ENCODE measurements at regions of chr13 and their contacts with region 1.

Region 1: GRCh38 chr13:48233046-48233907 is at the start of gene ITM2B:
- DNase-seq: peak; percentile 81
- ATAC-seq: peak; percentile 74
- H3K4me3 Mint-ChIP-seq: peak within 1 kb of the TSS; percentile 90
- H3K27ac Mint-ChIP-seq: peak within 1 kb of the TSS; percentile 90
- H3K4me1 Mint-ChIP-seq: peaks cover 44% of the 10 kb centered on the region
- H3K27me3 Mint-ChIP-seq: no peaks in the 10 kb centered on the region
- total RNA-seq, gene ITM2B: 385 to 429 TPM

Region 2: DNA sequence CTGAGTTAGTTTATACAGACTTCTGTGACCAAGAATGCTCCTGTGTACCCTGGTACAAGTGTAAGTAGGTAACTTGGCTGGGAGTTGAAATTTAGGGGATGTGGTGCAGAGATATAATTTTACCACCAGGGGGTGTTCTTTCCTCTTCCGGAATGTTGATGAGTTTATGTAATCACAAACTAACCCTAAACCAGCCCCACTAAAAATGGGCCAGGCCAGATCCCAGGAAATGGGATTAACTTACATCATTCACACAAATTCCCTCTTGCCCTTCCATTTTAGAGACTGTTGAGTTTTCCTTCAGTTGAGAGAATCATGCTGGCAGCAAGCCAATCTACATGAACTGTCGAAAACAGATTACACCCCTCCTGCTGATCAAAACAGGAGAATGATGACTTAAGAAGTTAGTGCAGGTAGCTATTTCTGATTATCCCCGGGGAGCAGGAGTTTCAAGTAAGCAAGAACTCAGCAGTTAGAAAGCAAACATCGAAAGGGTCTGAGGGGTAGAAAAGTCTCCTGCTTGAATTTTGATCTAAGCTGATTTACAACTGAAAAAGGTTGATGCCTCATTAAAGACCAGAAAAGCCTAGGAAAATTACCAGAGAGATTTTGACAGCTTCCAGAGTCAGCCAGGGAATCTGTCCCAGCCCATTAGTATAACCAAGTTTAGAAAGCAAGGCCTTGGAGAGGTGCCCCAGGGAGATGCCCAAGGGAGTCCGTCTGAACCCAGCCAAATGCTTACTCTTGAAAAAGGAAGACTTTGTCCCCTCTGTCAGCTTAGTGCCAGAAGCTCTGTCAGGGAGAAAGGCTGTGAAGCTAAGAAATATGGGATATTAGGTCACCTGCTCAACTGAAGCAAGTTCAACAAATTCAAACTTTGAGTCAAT is 106.1 kb before region 1 on chr13:
- POLR2A ChIA-PET with region 1: interaction called, 15 read pairs
- DNase-seq: no peak
- ATAC-seq: peak; percentile 85
- H3K4me3 Mint-ChIP-seq: peak overlapping the region; percentile 19
- H3K27ac Mint-ChIP-seq: peak overlapping the region; percentile 63
- H3K4me1 Mint-ChIP-seq: peaks cover 15% of the 10 kb centered on the region
- H3K27me3 Mint-ChIP-seq: no peaks in the 10 kb centered on the region

Region 3: GRCh38 chr13:48155848-48156247 is 77.4 kb before region 1 on chr13:
- POLR2A ChIA-PET with region 1: interaction called, 19 read pairs
- DNase-seq: no peak
- ATAC-seq: peak; percentile 81
- H3K4me3 Mint-ChIP-seq: peak overlapping the region; percentile 55
- H3K27ac Mint-ChIP-seq: peak overlapping the region; percentile 93
- H3K4me1 Mint-ChIP-seq: peaks cover 69% of the 10 kb centered on the region
- H3K27me3 Mint-ChIP-seq: no peaks in the 10 kb centered on the region

Region 4: GRCh38 chr13:48184260-48184659 is 49.0 kb before region 1 on chr13:
- POLR2A ChIA-PET with region 1: interaction called, 39 read pairs
- DNase-seq: no peak
- ATAC-seq: no peak
- H3K4me3 Mint-ChIP-seq: peak overlapping the region; percentile 34
- H3K27ac Mint-ChIP-seq: peak overlapping the region; percentile 97
- H3K4me1 Mint-ChIP-seq: peaks cover 50% of the 10 kb centered on the region
- H3K27me3 Mint-ChIP-seq: no peaks in the 10 kb centered on the region

Region 5: DNA sequence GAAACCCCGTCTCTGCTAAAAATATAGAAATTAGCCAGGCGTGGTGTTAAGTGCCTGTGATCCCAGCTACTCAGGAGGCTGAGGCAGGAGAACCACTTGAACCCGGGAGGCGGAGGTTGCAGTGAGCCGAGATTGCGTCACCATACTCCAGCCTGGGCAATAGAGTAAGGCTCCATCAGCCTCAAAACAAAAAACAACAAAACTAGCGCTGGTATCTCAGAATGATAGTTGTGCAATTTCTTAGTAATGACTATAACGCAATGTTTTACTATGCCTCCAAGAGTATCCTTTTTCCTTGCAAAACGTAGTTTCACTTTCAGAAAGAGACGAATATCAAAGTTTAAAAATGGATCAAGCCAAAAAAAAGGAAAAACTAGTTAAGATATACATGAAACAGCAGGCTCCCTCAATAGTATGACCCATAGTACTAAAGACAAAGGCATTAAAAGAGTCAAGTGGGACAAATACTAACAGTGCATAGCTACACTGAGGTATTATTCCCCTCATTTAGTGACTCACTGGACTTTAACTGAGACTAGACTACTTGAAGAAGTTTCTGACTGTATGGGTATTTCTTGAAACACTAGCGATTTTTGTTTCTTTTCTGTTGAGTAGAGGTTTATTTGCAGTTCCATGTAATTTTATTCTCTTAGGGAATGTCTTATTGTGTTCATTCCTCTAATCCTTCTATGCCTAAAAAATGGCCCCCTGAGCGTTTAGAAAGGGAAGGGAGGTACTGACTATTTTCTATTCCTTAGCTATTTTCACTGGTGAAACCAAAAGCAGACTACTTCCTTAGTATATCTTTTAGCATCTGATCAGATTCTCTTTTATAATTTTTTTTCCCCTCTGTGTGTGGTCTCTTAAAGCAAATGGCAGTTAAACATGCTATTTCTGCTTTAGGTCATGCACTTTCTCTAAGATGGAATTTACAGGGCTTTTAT is 10.6 kb before region 1 on chr13:
- POLR2A ChIA-PET with region 1: interaction called, 21 read pairs
- DNase-seq: no peak
- ATAC-seq: no peak
- H3K4me3 Mint-ChIP-seq: peak overlapping the region; percentile 78
- H3K27ac Mint-ChIP-seq: peak overlapping the region; percentile 90
- H3K4me1 Mint-ChIP-seq: peaks cover 31% of the 10 kb centered on the region
- H3K27me3 Mint-ChIP-seq: no peaks in the 10 kb centered on the region

Region 6: DNA sequence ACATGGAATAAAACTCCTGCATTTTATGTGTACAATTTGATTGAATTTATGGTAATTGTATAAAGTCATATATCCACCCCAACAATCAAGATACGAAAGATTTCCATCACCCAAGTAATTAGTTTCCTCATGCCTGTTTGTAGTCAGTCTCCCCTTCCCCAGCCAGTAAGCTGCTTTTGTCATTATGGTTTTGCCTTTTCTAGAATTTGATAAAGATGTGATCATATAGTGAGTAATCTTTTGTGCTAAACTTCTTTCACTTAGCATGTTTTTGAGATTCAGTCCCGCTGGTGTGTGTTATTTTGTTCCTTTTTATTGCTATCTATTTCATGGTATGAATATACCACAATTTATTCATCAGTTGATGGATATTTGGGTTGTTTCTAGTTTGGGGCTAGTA is 15.7 kb after region 1 on chr13:
- POLR2A ChIA-PET with region 1: no interaction called
- DNase-seq: no peak
- ATAC-seq: no peak
- H3K4me3 Mint-ChIP-seq: no peak overlapping the region
- H3K27ac Mint-ChIP-seq: no peak overlapping the region
- H3K4me1 Mint-ChIP-seq: peaks cover 24% of the 10 kb centered on the region
- H3K27me3 Mint-ChIP-seq: no peaks in the 10 kb centered on the region

Measured in activated naive CD8-positive, alpha-beta T cell treated with anti-CD3 and anti-CD28 coated beads, Interleukin-2, amount 10 ng/mL, durations not matched to agents 7 days and 5 days (primary cell).